Activated B cell treated with CpG ODN at 0.5 μM for 24 hours (primary cell): ENCODE measurements at regions of chr7 and their contacts with region 1.

Region 1: GRCh38 chr7:44072364-44073231 is 7.2 kb upstream of the PGAM2 start:
- DNase-seq: no peak
- ATAC-seq: peak; percentile 22
- H3K4me3 Mint-ChIP-seq: no peak overlapping the region
- H3K27ac Mint-ChIP-seq: peak overlapping the region; percentile 90
- H3K4me1 Mint-ChIP-seq: peaks cover 84% of the 10 kb centered on the region
- H3K27me3 Mint-ChIP-seq: no peaks in the 10 kb centered on the region
- CTCF ChIP-seq: no peak

Region 2: DNA sequence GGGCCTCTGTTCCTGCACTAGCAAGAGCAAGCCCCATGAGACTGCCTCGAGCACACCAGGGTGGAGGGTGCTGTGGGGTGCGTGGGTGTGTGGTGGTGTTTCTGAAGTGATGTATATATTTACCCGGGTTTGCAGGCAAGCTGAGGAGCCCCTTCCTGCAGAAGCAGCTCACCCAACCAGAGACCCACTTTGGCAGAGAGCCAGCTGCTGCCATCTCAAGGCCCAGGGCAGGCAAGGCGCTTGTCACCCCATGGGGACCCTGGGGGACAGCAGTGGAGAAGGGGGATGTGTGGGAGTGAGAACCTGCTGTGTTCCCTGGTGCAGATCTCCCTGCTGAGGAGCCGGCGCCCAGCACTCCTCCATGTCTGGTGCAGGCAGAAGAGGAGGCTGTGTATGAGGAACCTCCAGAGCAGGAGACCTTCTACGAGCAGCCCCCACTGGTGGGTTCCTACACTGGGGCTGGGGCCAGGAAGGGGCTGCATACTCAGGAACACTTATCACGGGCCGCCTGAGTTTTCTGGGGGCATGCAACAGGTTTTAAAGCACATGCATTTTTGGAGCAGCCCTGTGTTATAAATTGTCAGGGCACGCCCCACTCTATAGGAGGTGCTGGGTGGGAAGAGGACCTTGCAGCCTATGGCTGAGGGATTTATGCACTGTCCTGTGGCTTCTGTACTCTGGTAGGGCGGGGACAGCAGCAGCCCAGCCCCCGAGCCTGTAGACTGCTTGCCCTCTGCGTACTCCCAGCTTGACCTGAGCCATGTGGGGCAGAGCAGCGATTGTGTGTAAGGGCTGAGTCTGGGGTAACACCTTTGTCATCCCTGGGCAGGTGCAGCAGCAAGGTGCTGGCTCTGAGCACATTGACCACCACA is 13.1 kb before region 1 on chr7:
- CTCF ChIA-PET with region 1: no interaction called
- POLR2A ChIA-PET with region 1: interaction called, 5 read pairs
- intact Hi-C with region 1: loop called (anchors 1 kb)
- DNase-seq: peak; percentile 57
- ATAC-seq: peak; percentile 89
- H3K4me3 Mint-ChIP-seq: peak overlapping the region; percentile 82
- H3K27ac Mint-ChIP-seq: peak overlapping the region; percentile 98
- H3K4me1 Mint-ChIP-seq: peaks cover 74% of the 10 kb centered on the region
- H3K27me3 Mint-ChIP-seq: no peaks in the 10 kb centered on the region
- CTCF ChIP-seq: no peak